Common myeloid progenitor, CD34-positive (primary cell): ENCODE measurements at regions of chr14 and their contacts with region 1.

Region 1: DNA sequence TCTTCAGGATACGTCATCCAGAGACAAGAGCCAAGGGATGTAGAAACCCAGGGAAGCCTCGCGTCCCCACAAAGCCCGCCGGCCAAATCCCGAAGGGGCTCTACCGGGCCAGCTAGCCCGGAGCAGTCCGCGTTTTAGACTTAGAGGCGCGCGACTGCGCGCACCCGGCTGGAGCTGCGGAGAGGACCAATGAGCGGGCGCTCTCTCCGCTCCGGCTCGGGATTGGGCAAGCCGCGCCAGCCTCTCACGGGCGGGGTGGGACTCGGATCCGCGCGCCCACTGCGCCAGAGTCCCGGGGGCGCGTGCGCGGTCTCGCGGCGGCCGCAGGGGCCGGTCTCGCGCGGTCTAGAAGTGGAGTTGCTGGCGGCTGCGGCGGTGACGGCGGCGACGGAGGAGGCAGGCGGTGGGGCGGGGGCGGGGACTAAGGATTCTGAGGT is 239 bp upstream of the PALS1 start:
- DNase-seq: peak; percentile 95 to 98 (median 97)
- H3K4me3 ChIP-seq: peak overlapping the region; percentile 78 to 96 (median 89)
- H3K27ac ChIP-seq: peak overlapping the region in 1 of 2 experiments; percentile 82
- H3K4me1 ChIP-seq: peaks cover 4 to 22% (median 16%) of the 10 kb centered on the region in 4 experiments
- H3K27me3 ChIP-seq: peaks cover 0 to 7% (median 0%) of the 10 kb centered on the region in 5 experiments

Region 2: DNA sequence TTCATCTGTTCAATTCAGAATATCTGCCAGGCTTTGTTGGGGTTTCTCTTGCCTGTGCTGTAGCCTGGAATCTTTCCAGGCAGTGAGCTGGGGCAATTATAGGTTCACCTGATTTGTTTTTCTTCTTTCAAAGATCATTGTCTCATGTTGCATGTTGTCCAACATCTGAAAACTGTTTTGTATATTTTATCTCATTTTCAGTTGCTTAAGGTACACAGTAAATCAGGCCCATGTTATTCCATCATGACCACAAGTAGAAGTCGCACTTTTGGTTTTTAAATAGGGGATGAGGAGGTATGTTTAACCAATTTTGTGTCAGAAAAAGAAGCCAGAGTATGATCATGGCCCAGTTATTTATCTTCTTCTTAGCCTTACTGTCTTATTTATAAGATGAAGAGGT is 1853.4 kb before region 1 on chr14:
- CTCF ChIA-PET with region 1: no interaction called
- POLR2A ChIA-PET with region 1: interaction called, 11 read pairs
- DNase-seq: no peak
- H3K4me3 ChIP-seq: no peak overlapping the region
- H3K27ac ChIP-seq: no peak overlapping the region
- H3K4me1 ChIP-seq: peaks cover 0 to 5% (median 2%) of the 10 kb centered on the region in 4 experiments
- H3K27me3 ChIP-seq: no peaks in the 10 kb centered on the region

Region 3: GRCh38 chr14:67173719-67174118 is 67.3 kb before region 1 on chr14:
- CTCF ChIA-PET with region 1: no interaction called
- POLR2A ChIA-PET with region 1: no interaction called
- DNase-seq: peak in 1 of 3 donors; percentile 6
- H3K4me3 ChIP-seq: no peak overlapping the region
- H3K27ac ChIP-seq: no peak overlapping the region
- H3K4me1 ChIP-seq: no peaks in the 10 kb centered on the region
- H3K27me3 ChIP-seq: no peaks in the 10 kb centered on the region

Region 4: GRCh38 chr14:67251573-67252226 is 10.7 kb after region 1 on chr14:
- CTCF ChIA-PET with region 1: interaction called, 10 read pairs
- POLR2A ChIA-PET with region 1: no interaction called
- DNase-seq: no peak
- H3K4me3 ChIP-seq: no peak overlapping the region
- H3K27ac ChIP-seq: no peak overlapping the region
- H3K4me1 ChIP-seq: no peaks in the 10 kb centered on the region
- H3K27me3 ChIP-seq: no peaks in the 10 kb centered on the region

Region 5: GRCh38 chr14:67491741-67492505 is 250.9 kb after region 1 on chr14:
- CTCF ChIA-PET with region 1: no interaction called
- POLR2A ChIA-PET with region 1: no interaction called
- DNase-seq: no peak
- H3K4me3 ChIP-seq: no peak overlapping the region
- H3K27ac ChIP-seq: no peak overlapping the region
- H3K4me1 ChIP-seq: peaks cover 12 to 26% (median 22%) of the 10 kb centered on the region in 4 experiments
- H3K27me3 ChIP-seq: no peaks in the 10 kb centered on the region